Sigmoid colon (tissue), 7 donors: ENCODE measurements at regions of chr1 and their contacts with region 1.

Region 1: DNA sequence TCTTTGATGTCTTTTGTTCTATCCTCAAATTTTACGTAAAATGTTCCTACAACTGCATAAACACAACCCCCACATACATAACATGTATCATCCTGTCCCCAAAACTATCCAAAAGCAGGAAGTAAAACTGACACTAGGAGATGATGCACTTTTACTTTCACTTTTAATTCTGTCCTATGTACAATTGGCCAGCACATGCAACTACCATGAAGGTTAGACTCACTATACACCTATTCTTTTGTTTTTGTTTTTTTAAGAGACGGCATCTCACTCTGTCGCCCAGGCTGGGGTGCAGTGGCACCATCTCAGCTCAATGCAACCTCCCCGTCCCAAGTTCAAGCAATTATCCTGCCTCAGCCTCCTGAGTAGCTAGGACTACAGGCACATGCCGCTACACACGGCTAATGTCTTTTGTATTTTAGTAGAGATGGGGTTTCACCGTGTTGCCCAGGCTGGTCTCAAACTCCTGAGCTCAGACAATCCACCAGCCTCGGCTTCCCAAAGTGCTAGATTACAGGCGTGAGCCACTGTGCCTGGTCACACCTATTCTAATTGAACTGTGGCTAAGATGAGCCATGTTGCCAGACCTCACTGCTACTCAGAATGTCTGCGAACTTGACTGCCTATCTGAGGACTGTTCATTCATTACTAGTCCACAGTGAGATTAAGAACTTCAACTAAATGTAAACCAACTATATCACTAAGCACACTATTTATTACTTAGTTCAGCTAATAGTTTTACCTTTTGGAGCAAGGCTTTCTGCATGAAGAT is 48.0 kb downstream of the TOR3A start:
- DNase-seq: no peak
- H3K4me3 ChIP-seq: peak overlapping the region; percentile 10 to 35 (median 25)
- H3K27ac ChIP-seq: peak overlapping the region; percentile 35 to 68 (median 66)
- H3K4me1 ChIP-seq: peaks cover 0 to 25% (median 5%) of the 10 kb centered on the region in 4 donors
- H3K27me3 ChIP-seq: no peaks in the 10 kb centered on the region
- CTCF ChIP-seq: no peak
- EP300 ChIP-seq: no peak
- POLR2A ChIP-seq: no peak

Region 2: DNA sequence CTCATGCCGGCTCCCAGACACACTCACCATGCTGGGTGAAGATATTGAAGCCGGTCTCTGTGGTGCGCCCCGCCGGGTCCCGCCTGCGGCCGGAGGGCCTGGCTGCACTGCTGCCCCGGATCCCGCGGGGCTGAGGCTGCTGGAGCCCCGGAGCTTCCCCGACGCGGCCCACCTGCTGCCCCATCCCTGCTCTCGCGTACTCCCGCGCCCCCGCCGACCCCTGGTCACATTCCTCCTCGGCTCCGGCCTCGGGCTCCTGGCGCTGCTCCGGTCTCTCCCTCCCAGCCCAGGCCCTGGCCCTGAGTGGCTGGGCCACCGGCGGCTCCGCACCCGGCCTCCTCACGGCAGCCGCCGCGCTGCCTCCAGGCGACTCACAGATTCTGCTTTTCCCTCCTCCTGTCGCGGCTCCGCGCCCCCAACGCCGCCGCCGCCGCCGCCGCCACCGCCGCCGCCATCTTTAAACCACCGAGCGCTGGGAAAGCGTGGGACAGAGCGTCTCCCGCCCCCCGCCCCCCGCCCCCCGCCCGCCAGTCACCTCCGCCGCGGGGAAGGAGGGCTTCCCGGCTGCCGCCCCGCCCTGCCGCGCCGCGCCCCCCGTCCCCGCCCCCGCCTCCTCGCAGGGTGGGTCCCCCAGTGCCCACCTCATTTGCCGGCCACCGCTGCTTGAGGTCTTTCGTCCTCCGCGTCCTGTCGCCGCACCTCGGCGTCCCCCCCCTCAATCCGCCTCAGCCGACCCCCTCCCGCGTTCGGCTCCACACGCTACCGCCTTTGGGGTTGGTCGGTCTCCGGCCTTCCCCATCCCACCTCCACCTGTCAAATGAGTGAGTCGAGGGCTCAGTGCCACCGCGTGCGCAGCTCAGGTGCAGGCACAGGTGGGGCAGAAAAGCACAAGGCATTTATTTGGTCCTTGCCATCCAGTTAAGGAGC is 99.6 kb after region 1 on chr1 and contains the start of gene ABL2:
- intact Hi-C with region 1: loop called (anchors 5 kb)
- DNase-seq: peak; percentile 69
- H3K4me3 ChIP-seq: peak within 1 kb of the TSS; percentile 85 to 98 (median 98)
- H3K27ac ChIP-seq: peak within 1 kb of the TSS; percentile 88 to 93 (median 88)
- H3K4me1 ChIP-seq: peaks cover 0 to 24% (median 14%) of the 10 kb centered on the region in 4 donors
- H3K27me3 ChIP-seq: no peaks in the 10 kb centered on the region
- CTCF ChIP-seq: no peak
- EP300 ChIP-seq: no peak
- POLR2A ChIP-seq: no peak
- total RNA-seq, gene ABL2: 10.3 to 32.6 (median 15.0) TPM